Right ventricle myocardium superior (tissue), 1 donor: ENCODE measurements at regions of chr10 and their contacts with region 1.

Region 1: DNA sequence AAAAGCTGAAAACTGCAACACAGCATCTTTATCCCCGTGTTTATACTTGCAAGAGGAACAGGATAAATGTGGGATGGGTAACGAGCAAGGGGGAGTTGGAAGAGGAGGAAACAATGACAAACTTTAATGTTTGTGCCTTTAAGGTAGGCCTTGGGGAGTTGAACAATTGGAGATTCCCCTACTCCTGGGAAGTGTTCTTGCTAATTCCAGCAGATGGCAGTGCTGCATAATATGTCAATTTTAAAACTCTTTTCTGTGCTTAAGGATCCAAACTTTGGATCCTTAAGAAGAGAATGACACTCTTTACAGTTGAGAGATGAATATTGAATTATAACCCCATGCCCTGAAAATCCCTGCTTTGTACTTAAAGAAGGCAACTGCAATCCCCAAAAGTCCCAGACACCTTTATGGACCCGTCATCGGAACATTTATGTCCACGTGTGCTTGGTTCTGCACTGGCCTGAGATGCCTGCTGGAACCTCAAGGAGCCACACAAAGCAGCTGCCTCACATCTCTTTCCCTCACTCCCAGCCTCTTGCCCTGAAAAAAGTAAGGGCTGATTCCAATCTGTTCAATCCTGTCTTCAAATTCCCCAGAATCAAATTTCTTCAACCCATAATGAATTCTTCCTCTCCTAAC is 12.0 kb downstream of the IFIT5 start:
- DNase-seq: no peak
- ATAC-seq: peak; percentile 77

Region 2: GRCh38 chr10:89201345-89202032 is 224.9 kb before region 1 on chr10:
- intact Hi-C with region 1: no loop called
- DNase-seq: no peak
- ATAC-seq: no peak

Region 3: DNA sequence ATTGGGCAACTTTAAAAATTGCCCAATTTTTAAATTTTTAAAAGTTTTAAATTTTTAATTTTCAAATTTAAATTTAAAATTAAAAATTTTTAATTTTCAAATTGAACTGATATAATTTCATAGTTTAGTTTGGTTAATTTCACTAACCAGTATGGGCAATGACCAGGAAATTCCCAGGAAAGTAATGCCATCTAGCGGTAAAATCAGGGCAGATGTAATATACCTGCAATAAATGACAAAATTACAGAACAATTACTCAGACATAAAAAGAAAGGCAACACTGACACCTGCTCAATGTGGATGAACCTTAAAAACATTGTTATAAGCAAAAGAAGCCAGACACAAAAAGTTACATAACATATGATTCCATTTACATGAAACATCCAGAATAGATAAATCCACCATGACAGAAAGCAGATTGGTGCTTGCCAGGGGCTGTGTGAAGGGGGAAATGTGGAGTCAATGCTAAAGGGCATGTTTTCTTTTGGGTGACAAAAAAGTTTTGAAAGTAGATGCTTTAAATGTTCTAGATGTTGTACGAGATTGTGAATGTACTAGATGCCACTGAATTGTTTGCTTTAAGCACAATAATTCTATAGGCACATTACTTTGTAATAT is 137.6 kb after region 1 on chr10:
- intact Hi-C with region 1: loop called (anchors 2 kb)
- DNase-seq: no peak
- ATAC-seq: peak; percentile 84

Region 4: DNA sequence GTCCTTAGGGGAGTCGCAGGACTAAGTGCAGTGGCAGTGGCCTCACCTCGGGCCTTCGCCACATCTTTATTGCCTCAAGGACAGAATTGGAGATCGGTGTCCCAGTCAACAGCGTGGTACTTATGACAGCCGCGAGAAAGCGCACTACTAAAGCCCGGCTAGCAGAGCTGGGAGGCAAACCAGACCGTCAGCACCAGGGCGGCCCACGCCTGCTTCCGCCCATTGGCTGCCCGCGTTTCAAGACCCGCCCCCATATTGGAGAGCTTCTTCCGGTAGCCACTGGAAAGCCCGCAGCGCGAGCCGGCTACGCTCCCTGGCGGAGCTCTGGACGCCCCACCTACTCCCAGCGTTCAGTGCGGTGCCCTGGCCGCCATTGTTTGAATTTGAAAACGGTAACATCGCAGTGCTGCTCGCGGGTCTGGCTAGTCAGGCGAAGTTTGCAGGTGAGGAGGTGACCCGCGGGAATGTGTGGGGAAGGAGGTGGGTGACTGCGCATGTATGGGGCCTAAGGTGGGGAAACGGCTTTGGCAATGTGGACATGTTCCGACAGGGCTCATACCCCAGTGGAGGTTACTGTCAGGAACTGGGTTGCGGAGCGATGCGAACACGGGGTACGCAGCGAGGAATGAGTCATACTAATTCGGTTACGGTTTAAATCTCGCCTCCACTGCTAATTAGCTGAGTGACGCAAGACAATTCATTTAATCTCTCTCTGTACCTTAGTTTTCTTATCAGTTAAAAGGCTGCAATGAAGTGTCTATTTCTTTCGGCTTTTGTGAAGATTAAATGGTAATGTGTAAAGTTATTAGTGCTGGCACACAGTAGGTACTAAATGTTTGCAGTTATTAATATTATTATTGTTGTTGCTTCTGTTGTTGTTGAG is 275.1 kb after region 1 on chr10 and contains the start of gene KIF20B:
- intact Hi-C with region 1: loop called (anchors 10 kb)
- DNase-seq: peak; percentile 97
- ATAC-seq: peak; percentile 100
- total RNA-seq, gene KIF20B: 2.6 TPM